ENCODE measurements at regions of chr2 and their contacts with region 1.

Region 1: DNA sequence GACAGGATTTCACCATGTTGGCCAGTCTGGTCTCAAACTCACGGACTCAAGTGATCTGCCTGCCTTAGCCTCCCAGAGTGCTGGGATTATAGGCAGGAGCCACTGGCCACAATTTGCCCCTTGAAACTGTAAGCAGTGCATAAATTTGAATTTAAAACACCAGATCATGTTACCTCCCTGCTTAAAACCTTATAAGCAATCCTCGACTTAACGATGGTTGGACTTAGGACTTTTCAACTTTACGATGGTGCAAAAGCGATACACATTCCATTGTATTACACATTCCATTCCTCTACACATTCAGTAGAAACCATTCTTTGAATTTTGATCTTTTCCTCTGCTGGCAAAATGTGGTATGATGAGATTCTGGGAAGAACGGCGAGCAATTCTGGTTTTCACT is 23.2 kb upstream of the EFR3B start:
- DNase-seq: no peak
- ATAC-seq: no peak
- H3K4me3 ChIP-seq: no peak overlapping the region
- H3K27ac ChIP-seq: no peak overlapping the region
- H3K4me1 ChIP-seq: no peaks in the 10 kb centered on the region
- H3K27me3 ChIP-seq: peaks cover 1% of the 10 kb centered on the region; the same call in 1 of the 2 replicates
- CTCF ChIP-seq: no peak

Region 2: GRCh38 chr2:25054720-25055119 is 36.0 kb after region 1 on chr2:
- CTCF ChIA-PET with region 1: interaction called, 11 read pairs
- POLR2A ChIA-PET with region 1: no interaction called
- in situ Hi-C with region 1: no loop called
- intact Hi-C with region 1: no loop called
- DNase-seq: no peak
- ATAC-seq: peak; percentile 66; the same call in 1 of the 2 replicates
- H3K4me3 ChIP-seq: no peak overlapping the region
- H3K27ac ChIP-seq: no peak overlapping the region
- H3K4me1 ChIP-seq: no peaks in the 10 kb centered on the region
- H3K27me3 ChIP-seq: no peaks in the 10 kb centered on the region
- CTCF ChIP-seq: no peak